GM12878 (cell line): ENCODE measurements at regions of chr3 and their contacts with region 1.

Region 1: GRCh38 chr3:72100601-72101187 is 315.7 kb upstream of the PROK2 start:
- DNase-seq: peak; percentile 77
- ATAC-seq: peak; percentile 74
- H3K4me3 ChIP-seq: peak overlapping the region; percentile 69; the same call in 1 of the 2 replicates
- H3K27ac ChIP-seq: peak overlapping the region; percentile 68
- H3K4me1 ChIP-seq: peaks cover 49% of the 10 kb centered on the region
- H3K27me3 ChIP-seq: no peaks in the 10 kb centered on the region
- CTCF ChIP-seq: no peak
- EP300 ChIP-seq: peak; percentile 49 to 76
- POLR2A ChIP-seq: peak; percentile 59
- RAD21 ChIP-seq: 0 out of 2 replicates have a peak, but pooled peaks have one; percentile 5

Region 2: GRCh38 chr3:71859123-71859519 is 241.6 kb before region 1 on chr3:
- CTCF ChIA-PET with region 1: no interaction called
- POLR2A ChIA-PET with region 1: no interaction called
- RAD21 ChIA-PET with region 1: no interaction called
- SMC1A ChIA-PET with region 1: no interaction called
- in situ Hi-C with region 1: no loop called
- intact Hi-C with region 1: no loop called
- DNase-seq: no peak
- ATAC-seq: peak; percentile 71
- H3K4me3 ChIP-seq: no peak overlapping the region
- H3K27ac ChIP-seq: no peak overlapping the region
- H3K4me1 ChIP-seq: no peaks in the 10 kb centered on the region
- H3K27me3 ChIP-seq: peaks cover 2 to 3% of the 10 kb centered on the region in 2 experiments; a peak in 2 of 4 replicates
- CTCF ChIP-seq: peak; percentile 34 to 42 (median 38); a peak in 5 of 6 replicates
- EP300 ChIP-seq: no peak
- POLR2A ChIP-seq: no peak
- RAD21 ChIP-seq: peak; percentile 52

Region 3: DNA sequence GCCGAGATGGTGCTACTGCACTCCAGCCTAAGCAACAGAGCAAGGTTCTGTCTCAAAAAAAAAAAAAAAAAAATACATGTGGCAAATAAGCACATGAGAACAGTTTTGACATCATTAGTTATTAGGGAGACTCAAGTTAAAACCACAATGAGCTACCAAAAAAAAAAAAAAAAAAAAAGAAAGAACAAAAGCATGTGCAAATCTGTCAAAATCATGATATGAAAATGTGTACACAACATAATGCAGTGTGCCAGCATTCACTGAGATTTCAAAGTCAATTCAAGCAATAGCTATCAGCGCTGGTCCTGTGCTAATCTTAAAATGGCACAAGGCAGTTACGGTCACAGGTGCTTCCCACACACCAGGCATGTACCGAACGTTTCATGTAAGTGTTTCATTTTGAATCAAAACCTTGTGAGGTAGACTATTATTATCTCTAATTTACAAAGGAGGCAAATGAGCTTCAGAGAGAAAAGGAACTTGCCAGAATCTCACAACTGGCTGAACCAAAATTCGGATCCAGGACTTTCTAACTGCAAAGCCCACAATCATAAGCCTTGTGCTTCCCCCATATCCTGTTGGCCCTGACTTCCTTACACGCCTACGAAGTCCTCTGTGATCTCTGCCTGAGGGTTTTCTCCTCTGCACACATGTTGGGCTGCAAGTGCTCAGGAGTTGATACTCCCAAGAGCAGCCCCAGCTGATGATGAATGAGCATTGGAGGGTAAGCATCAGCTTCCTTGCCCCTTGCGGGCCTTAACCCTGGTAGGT is 115.7 kb before region 1 on chr3:
- CTCF ChIA-PET with region 1: interaction called, 6 read pairs
- POLR2A ChIA-PET with region 1: interaction called, 21 read pairs
- RAD21 ChIA-PET with region 1: interaction called, 37 read pairs
- SMC1A ChIA-PET with region 1: interaction called, 34 read pairs
- in situ Hi-C with region 1: no loop called
- intact Hi-C with region 1: no loop called
- DNase-seq: peak; percentile 97
- ATAC-seq: peak; percentile 89
- H3K4me3 ChIP-seq: peak overlapping the region; percentile 22; the same call in 1 of the 2 replicates
- H3K27ac ChIP-seq: peak overlapping the region; percentile 92
- H3K4me1 ChIP-seq: peaks cover 64% of the 10 kb centered on the region
- H3K27me3 ChIP-seq: no peaks in the 10 kb centered on the region
- CTCF ChIP-seq: no peak
- EP300 ChIP-seq: peak; percentile 90 to 95
- POLR2A ChIP-seq: no peak
- RAD21 ChIP-seq: peak; percentile 25; the same call in 1 of the 2 replicates

Region 4: GRCh38 chr3:72120806-72121778 is 20.4 kb after region 1 on chr3:
- CTCF ChIA-PET with region 1: interaction called, 3 read pairs
- POLR2A ChIA-PET with region 1: interaction called, 4 read pairs
- RAD21 ChIA-PET with region 1: interaction called, 5 read pairs
- SMC1A ChIA-PET with region 1: interaction called, 21 read pairs
- in situ Hi-C with region 1: no loop called
- intact Hi-C with region 1: no loop called
- DNase-seq: peak; percentile 16
- ATAC-seq: peak; percentile 91
- H3K4me3 ChIP-seq: no peak overlapping the region
- H3K27ac ChIP-seq: no peak overlapping the region
- H3K4me1 ChIP-seq: peaks cover 25% of the 10 kb centered on the region
- H3K27me3 ChIP-seq: no peaks in the 10 kb centered on the region
- CTCF ChIP-seq: no peak
- EP300 ChIP-seq: no peak; a peak in 1 of 4 replicates
- POLR2A ChIP-seq: no peak
- RAD21 ChIP-seq: no peak

Region 5: GRCh38 chr3:72177083-72178050 is 76.7 kb after region 1 on chr3:
- CTCF ChIA-PET with region 1: interaction called, 3 read pairs
- POLR2A ChIA-PET with region 1: interaction called, 3 read pairs
- RAD21 ChIA-PET with region 1: interaction called, 17 read pairs
- SMC1A ChIA-PET with region 1: interaction called, 9 read pairs
- in situ Hi-C with region 1: no loop called
- intact Hi-C with region 1: loop called (anchors 1 kb)
- DNase-seq: no peak
- ATAC-seq: peak; percentile 64
- H3K4me3 ChIP-seq: peak overlapping the region; percentile 39
- H3K27ac ChIP-seq: peak overlapping the region; percentile 85
- H3K4me1 ChIP-seq: peaks cover 29% of the 10 kb centered on the region
- H3K27me3 ChIP-seq: no peaks in the 10 kb centered on the region
- CTCF ChIP-seq: no peak
- EP300 ChIP-seq: peak; percentile 21 to 40; a peak in 2 of 4 replicates
- POLR2A ChIP-seq: no peak
- RAD21 ChIP-seq: no peak

Region 6: DNA sequence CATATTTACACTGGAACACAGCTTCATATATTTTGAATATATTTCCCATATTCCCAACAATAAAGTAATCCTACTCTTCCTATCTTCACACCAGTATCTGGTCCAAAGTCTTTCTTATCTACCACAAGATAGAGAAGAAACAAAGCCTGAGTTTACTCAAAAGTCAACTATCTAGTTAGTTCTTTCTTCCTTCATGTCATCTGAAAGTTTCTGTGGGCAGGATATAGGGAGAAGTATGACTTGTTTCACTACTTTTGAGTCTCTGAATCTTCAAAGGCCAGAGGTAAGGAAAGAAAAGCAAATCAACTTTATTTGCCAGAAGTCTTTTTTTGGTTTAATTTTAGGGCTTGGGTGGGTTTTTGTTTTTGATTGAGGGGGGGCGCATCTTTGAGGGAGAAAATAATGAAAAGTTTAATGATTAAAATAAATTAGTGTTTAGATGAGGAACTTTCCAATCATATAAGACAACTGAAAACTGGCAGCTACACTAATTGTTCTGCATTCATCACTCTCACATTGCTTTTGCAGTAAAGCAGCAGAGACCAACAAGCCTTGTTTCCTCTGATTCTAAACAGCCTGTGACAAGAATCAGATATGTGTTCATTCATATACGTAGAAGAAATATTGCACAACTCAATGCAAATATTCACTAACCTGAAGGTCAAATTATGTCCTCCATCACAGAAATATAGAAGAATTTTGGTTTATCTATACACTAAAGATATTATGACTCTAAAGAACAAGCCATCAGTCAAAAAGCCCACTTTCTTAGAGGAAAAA is 326.1 kb after region 1 on chr3:
- CTCF ChIA-PET with region 1: no interaction called
- POLR2A ChIA-PET with region 1: no interaction called
- RAD21 ChIA-PET with region 1: no interaction called
- SMC1A ChIA-PET with region 1: no interaction called
- in situ Hi-C with region 1: no loop called
- intact Hi-C with region 1: loop called (anchors 5 kb)
- DNase-seq: no peak
- ATAC-seq: peak; percentile 76
- H3K4me3 ChIP-seq: 0 out of 2 replicates have a peak overlapping the region, but pooled peaks have one; percentile 27
- H3K27ac ChIP-seq: peak overlapping the region; percentile 37; the same call in 1 of the 2 replicates
- H3K4me1 ChIP-seq: peaks cover 28% of the 10 kb centered on the region
- H3K27me3 ChIP-seq: no peaks in the 10 kb centered on the region
- CTCF ChIP-seq: no peak
- EP300 ChIP-seq: no peak
- POLR2A ChIP-seq: no peak
- RAD21 ChIP-seq: no peak